ENCODE measurements at regions of chr22 and their contacts with region 1.

Region 1: DNA sequence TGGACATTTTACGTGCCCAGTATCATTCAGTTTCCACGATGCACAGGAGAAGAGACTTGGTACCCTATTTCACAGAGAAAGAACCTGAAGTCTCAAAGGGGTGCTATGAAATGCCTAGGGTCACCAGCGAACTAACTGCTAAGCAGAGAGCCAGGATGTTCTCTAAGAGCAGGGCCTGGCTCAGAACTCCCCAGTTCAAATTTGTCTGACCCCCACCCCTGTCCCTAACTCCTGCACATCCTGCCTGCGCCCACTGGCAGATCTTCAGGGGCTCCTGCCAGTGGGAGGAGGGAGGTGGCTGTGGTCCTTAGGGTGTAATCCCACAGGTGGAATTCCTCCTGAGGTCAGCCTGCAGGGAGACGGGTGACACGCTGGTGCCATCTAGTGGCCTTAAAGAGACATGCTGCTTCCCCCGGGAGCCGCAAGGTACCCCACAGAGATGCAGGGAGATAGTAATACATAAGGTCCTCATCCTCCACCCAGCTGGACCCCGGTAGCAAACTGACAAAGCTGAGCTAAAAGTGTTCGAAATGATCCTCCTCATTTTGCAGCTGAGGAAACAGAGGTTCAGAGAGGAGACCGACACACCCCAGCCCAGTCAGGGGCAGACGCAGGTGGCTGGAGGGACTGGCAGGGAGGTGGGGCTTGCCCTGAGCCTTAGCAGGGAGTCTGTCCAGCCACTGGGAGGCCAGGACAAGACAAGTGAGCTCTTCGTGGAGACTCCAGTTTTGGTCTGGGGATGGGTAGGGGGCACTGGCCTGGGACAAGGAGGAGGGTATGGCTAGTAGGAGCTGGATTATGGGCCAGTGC is 34.1 kb downstream of the MB start:
- DNase-seq: peak; percentile 79
- H3K27ac ChIP-seq: no peak overlapping the region
- CTCF ChIP-seq: peak; percentile 95

Region 2: GRCh38 chr22:35430897-35431322 is 152.2 kb before region 1 on chr22:
- CTCF ChIA-PET with region 1: interaction called, 10 read pairs
- POLR2A ChIA-PET with region 1: no interaction called
- DNase-seq: peak; percentile 55
- H3K27ac ChIP-seq: peak overlapping the region; percentile 50; the same call in 1 of the 2 replicates
- CTCF ChIP-seq: peak; percentile 87

Region 3: GRCh38 chr22:35684270-35684700 is 101.2 kb after region 1 on chr22:
- CTCF ChIA-PET with region 1: no interaction called
- POLR2A ChIA-PET with region 1: no interaction called
- DNase-seq: no peak
- H3K27ac ChIP-seq: no peak overlapping the region
- CTCF ChIP-seq: no peak

Region 4: GRCh38 chr22:36010882-36011281 is 427.8 kb after region 1 on chr22:
- CTCF ChIA-PET with region 1: no interaction called
- POLR2A ChIA-PET with region 1: no interaction called
- DNase-seq: no peak
- H3K27ac ChIP-seq: no peak overlapping the region
- CTCF ChIP-seq: no peak

Measured in RWPE1 (cell line).